ENCODE measurements at regions of chr11 and their contacts with region 1.

Region 1: DNA sequence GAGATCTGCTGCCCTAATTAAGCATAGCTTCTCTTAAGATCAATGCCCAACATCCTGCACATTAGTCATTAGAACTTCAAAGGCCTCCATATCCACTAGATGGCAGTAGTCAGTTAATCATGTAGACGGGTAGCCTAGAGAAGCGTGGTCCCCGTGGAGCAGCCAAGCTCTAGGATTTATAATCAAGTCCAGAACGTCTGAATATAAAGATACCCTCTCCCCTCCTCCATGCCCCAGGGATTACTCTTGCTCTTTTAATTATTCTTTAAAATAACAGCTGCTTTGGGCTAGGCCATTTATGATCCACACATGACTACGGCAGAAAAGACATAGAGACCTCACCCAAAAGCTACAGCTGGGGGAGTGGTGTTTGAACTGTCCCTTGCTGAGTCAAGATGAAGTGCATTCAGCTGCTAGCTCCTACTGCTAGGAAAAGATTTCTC is 327.6 kb upstream of the PLET1 start:
- DNase-seq: peak; percentile 8
- H3K4me3 Mint-ChIP-seq: no peak overlapping the region
- H3K27ac Mint-ChIP-seq: peak overlapping the region; percentile 20
- H3K4me1 Mint-ChIP-seq: no peaks in the 10 kb centered on the region
- H3K27me3 Mint-ChIP-seq: no peaks in the 10 kb centered on the region

Region 2: GRCh38 chr11:112511271-112511670 is 77.0 kb before region 1 on chr11:
- intact Hi-C with region 1: no loop called
- DNase-seq: no peak
- H3K4me3 Mint-ChIP-seq: no peak overlapping the region
- H3K27ac Mint-ChIP-seq: no peak overlapping the region
- H3K4me1 Mint-ChIP-seq: no peaks in the 10 kb centered on the region
- H3K27me3 Mint-ChIP-seq: peaks cover 9% of the 10 kb centered on the region

Region 3: GRCh38 chr11:112564228-112564955 is 23.9 kb before region 1 on chr11:
- intact Hi-C with region 1: no loop called
- DNase-seq: no peak
- H3K4me3 Mint-ChIP-seq: no peak overlapping the region
- H3K27ac Mint-ChIP-seq: no peak overlapping the region
- H3K4me1 Mint-ChIP-seq: no peaks in the 10 kb centered on the region
- H3K27me3 Mint-ChIP-seq: peaks cover 12% of the 10 kb centered on the region

Region 4: GRCh38 chr11:112795142-112795815 is 207.0 kb after region 1 on chr11:
- intact Hi-C with region 1: loop called (anchors 5 kb)
- DNase-seq: no peak
- H3K4me3 Mint-ChIP-seq: no peak overlapping the region
- H3K27ac Mint-ChIP-seq: no peak overlapping the region
- H3K4me1 Mint-ChIP-seq: no peaks in the 10 kb centered on the region
- H3K27me3 Mint-ChIP-seq: no peaks in the 10 kb centered on the region

Region 5: GRCh38 chr11:112931703-112932102 is 343.4 kb after region 1 on chr11:
- intact Hi-C with region 1: loop called (anchors 10 kb)
- DNase-seq: no peak
- H3K4me3 Mint-ChIP-seq: no peak overlapping the region
- H3K27ac Mint-ChIP-seq: no peak overlapping the region
- H3K4me1 Mint-ChIP-seq: no peaks in the 10 kb centered on the region
- H3K27me3 Mint-ChIP-seq: peaks cover 6% of the 10 kb centered on the region

Region 6: GRCh38 chr11:113162592-113162962 is 574.3 kb after region 1 on chr11:
- intact Hi-C with region 1: no loop called
- DNase-seq: no peak
- H3K4me3 Mint-ChIP-seq: no peak overlapping the region
- H3K27ac Mint-ChIP-seq: no peak overlapping the region
- H3K4me1 Mint-ChIP-seq: no peaks in the 10 kb centered on the region
- H3K27me3 Mint-ChIP-seq: no peaks in the 10 kb centered on the region

Region 7: DNA sequence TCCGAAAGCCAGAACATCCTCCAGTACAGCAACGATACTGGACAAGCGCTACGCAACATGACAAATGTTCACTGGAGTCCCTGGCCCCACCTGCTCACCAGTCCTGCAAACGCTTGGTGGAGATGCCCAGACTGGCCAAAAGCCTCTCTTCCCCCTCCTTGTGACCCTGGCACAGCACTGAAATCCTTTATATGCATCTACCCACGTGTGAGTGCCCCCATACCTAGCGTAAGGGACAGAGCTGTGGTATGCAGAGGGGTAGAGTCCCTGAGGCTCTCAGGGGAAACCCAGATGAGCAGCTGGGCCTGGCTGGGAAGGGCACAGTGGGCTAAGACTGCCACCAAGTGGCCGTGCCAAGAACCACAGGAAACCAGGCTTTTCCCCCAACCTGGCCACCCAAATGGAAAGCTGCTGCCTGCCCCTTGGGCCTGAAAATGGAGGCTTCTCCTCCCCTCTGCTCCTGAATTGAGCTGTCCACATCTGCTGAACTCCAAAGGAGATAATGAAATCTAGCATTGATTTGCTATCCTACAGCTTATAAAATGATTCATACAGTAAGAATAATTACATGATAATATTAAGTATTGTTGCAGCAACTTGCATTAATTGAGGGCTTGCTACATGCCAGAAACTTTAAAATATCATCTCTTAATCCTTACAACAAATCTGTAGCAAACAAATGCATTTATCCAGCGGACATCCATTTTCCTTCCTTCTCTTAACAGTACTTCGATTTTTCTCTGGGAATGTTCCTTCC is 701.3 kb after region 1 on chr11:
- intact Hi-C with region 1: loop called (anchors 1 kb)
- DNase-seq: peak; percentile 52
- H3K4me3 Mint-ChIP-seq: no peak overlapping the region
- H3K27ac Mint-ChIP-seq: no peak overlapping the region
- H3K4me1 Mint-ChIP-seq: no peaks in the 10 kb centered on the region
- H3K27me3 Mint-ChIP-seq: peaks cover 4% of the 10 kb centered on the region

Measured in activated T-helper 1 cell treated with anti-CD3 and anti-CD28 coated beads, Interleukin-12 subunit alpha, Interleukin-12 subunit beta, Interleukin-2, Interleukin-4 antibody, amounts not matched to agents 30 ng/mL and 10 ng/mL and 1 ng/mL, durations not matched to agents 14 hours and 24 hours and 36 hours (primary cell).